Thyroid gland (tissue), 4 donors: ENCODE measurements at regions of chr17 and their contacts with region 1.

Region 1: DNA sequence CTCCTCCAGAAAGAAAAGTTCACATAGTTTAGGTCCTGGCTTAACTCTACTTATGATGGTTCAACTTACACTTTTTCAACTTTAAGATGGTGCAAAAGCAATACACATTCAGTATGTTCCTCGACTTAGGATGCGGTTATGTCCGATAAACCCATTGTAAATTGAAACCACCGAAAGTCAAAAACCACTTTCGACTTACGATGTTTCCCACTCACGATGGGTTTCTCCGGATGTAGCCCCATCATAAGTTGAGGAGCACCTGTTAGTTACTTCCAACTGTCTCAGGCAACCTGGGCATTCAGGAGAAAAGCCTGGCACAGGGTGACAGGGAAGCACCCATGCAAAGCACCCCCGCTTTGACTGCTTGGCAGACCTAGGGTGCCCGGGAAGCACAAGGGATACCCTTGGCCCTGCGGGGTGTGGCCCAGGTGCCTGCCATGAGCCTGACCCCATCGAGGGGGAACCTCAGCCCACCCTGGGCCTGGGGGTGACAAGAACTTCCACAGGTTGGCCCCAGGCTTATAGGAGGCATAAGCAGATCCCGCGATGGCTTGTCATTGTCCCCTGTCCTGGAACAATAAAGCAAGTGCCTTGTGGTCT is 14.0 kb downstream of the UNC119 start:
- DNase-seq: no peak
- H3K4me3 ChIP-seq: no peak overlapping the region
- H3K27ac ChIP-seq: no peak overlapping the region
- H3K4me1 ChIP-seq: no peaks in the 10 kb centered on the region
- H3K27me3 ChIP-seq: no peaks in the 10 kb centered on the region
- CTCF ChIP-seq: no peak
- POLR2A ChIP-seq: no peak

Region 2: DNA sequence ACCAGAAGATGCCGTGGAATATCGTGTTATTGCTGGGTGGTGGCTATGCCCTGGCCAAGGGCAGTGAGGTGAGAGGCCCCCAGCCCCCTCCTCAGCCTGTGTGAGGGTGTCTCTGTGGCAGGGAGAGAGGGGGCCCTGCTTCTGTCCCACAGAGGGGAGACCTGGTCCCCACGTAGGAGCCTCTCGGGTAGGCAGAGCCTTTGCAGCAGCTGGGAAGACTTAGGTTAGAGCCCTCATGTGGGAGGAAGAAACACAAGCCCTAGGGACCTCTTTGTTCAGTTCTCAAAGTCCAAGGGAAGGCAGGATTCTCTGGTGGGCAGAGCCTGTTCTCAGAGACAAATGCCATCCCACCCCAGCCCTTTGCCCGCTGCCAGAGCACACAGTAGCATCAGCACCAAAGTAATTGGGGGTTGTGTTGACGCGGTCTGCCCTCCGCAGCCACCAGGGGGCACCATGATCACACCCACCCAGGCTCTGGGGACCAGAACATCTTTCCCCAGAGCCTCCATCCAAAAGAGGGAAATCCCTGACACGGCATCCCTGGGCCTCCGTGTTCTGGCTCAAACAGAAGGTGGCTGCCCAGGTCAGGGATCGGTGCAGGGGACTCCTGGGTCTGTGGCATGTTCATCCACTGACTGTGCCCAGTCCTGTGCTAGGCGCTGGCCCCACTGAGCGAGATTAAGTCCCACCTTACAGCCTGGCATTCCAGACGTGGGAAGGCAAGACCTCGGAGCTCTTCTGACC is 43.8 kb before region 1 on chr17:
- intact Hi-C with region 1: loop called (anchors 2 kb)
- DNase-seq: peak; percentile 72 to 80
- H3K4me3 ChIP-seq: no peak overlapping the region
- H3K27ac ChIP-seq: no peak overlapping the region
- H3K4me1 ChIP-seq: peaks cover 3 to 6% of the 10 kb centered on the region in 2 donors
- H3K27me3 ChIP-seq: no peaks in the 10 kb centered on the region
- CTCF ChIP-seq: peak; percentile 78 to 92 (median 86)
- POLR2A ChIP-seq: no peak

Region 3: DNA sequence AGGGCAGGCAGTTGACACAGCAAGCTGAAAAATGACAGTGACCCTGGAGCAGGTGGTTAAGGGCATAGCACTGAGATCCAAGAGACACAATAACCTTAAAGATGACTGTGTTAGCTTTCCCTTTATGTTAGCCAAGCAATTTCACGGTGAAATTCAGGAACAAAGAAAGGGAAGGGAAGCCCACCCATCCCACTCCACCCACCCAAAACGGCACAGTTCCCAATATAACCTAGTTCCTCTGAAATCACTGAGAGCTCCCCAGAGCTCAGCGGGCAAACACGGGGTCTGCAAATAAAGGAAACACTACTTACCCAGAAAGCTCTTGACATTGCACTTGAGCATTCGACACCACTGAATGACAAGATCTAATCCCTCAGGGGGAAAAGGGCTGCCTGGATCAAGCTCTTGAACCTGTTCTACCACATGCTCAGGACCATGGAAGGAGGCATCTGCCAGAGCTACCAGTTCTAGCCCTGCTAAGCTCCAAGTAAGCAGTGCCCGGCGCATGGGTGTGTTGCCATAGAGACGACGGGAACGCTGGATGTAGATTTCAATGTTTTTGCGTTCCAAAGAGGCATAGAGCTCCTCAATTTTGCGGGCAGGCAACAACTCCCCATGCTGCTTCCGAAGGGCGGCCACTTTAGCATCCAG is 95.9 kb after region 1 on chr17:
- intact Hi-C with region 1: no loop called
- DNase-seq: no peak
- H3K4me3 ChIP-seq: no peak overlapping the region
- H3K27ac ChIP-seq: no peak overlapping the region
- H3K4me1 ChIP-seq: no peaks in the 10 kb centered on the region
- H3K27me3 ChIP-seq: no peaks in the 10 kb centered on the region
- CTCF ChIP-seq: no peak
- POLR2A ChIP-seq: no peak